Mammary epithelial cell (primary cell): ENCODE measurements at regions of chr1 and their contacts with region 1.

Region 1: DNA sequence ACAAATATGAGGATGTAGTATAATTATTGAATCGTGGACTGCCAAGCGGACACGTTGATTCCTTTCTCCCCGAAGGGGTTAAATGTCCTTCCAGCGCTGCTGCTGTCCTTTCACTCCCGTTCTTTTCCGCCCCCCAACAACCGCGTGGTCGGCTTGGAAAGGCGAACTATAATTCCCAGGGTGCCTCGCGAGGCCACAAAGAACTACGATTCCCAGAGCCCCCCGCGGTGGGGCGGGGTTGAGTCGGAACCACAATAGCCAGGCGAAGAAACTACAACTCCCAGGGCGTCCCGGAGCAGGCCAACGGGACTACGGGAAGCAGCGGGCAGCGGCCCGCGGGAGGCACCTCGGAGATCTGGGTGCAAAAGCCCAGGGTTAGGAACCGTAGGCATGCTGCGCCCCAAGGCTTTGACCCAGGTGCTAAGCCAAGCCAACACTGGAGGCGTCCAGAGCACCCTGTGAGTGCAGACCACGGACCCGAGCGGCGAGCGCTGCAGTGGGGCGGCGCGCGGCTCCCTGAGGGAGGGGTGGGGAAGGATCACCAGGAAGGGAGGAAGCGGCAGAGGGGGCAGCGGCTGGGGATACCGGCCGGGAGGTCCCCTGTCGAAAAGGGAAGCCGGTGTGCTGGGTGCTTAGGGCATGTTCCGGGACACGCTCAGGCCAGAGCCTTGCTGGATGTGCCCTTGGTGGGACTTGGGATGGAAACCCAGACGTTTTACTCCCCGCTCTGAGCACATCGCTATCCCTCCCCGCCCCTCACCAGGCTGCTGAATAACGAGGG is at the start of gene LAMTOR2:
- DNase-seq: peak; percentile 96
- H3K4me3 ChIP-seq: peak within 1 kb of the TSS; percentile 94 to 98 (median 98)
- H3K27ac ChIP-seq: peak within 1 kb of the TSS; percentile 73
- H3K4me1 ChIP-seq: peaks cover 6% of the 10 kb centered on the region
- H3K27me3 ChIP-seq: no peaks in the 10 kb centered on the region
- CTCF ChIP-seq: no peak
- total RNA-seq, gene LAMTOR2: 43.7 to 71.3 TPM

Region 2: DNA sequence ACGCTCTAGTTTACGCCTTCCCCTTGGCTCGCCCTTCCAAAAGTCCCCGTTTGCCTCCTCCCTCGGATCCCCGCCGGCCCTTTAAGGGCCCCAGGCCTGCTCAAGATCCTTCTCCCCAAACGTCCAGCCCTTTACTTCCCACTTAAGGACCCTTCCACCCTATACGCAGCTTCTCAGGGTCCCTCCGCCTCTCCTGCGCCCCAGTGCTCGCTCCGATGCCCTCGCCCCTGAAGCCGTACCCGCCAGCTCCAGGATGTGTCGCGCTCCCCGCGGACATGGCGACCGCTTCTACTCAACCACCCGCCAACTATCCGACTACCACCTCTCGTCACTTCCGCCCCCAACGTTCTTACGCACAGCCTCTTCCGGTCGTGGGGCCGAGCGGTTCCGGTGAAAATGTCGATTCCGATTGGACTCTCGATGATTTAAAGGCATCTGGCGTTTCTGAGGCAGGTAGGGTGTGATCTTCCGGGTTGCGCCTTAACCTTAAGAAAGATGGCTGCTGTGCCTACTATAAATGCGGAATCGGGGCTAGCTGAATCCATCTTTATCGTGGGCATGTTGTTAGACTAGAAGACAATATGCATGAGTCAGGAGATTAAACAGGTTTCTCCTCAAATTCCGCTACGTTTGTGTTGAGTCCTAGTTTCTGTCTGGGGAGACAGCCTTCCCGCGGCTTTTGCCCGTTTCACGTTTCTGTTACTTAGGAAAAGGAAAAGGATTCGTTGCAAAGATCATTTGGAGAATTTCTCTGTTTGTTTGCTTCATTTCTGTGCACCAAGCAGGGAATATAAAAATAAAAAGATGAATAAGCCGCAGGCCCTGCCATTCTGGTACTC is 120.4 kb before region 1 on chr1 and contains the start of gene KHDC4:
- CTCF ChIA-PET with region 1: no interaction called
- dilution Hi-C with region 1: no loop called
- in situ Hi-C with region 1: loop called in 1 of 2 experiments (anchors 10 kb)
- intact Hi-C with region 1: loop called (anchors 2 kb)
- DNase-seq: peak; percentile 99
- H3K4me3 ChIP-seq: peak within 1 kb of the TSS; percentile 82 to 95 (median 86)
- H3K27ac ChIP-seq: peak within 1 kb of the TSS; percentile 97
- H3K4me1 ChIP-seq: peaks cover 41% of the 10 kb centered on the region
- H3K27me3 ChIP-seq: no peaks in the 10 kb centered on the region
- CTCF ChIP-seq: no peak
- total RNA-seq, gene KHDC4: 35.3 to 56.5 TPM

Region 3: DNA sequence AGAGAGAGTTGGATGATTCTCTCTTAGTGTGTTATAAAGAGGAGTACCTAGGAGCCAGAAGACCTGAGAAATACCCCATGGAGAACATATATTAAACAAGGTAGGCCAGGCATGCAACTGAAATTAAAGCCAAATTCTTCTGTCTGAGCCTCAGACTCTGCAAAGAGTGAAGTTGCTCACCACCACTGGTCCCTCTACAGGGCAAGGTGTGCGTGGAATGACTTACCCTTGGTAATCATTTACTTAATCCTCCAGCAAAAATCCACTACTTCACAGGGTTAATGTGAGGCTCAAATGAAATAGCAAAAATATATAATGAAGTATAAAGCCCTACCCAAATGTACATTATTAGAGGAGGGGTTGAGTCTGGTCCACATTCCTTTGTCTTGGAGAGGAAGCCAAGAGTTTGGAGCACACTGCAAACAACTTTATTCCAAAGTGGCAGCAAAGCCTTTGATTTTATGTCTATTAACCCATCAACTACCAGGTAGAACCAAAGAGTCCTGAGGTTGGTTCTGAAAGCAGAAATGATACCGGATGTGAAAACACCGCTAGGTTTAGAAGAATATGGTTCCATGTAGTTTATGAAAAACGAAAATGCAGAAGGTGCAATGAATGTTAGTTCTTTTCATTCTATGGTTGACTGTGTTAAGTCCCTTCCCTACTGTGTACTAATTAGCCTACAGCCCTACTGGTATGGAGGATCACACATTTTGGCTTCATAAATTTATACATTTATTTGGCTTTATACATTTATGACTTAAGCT is 42.5 kb before region 1 on chr1:
- CTCF ChIA-PET with region 1: no interaction called
- dilution Hi-C with region 1: loop called (anchors 5 kb)
- in situ Hi-C with region 1: no loop called
- intact Hi-C with region 1: no loop called
- DNase-seq: no peak
- H3K4me3 ChIP-seq: no peak overlapping the region
- H3K27ac ChIP-seq: no peak overlapping the region
- H3K4me1 ChIP-seq: peaks cover under 1% of the 10 kb centered on the region
- H3K27me3 ChIP-seq: no peaks in the 10 kb centered on the region
- CTCF ChIP-seq: no peak

Region 4: GRCh38 chr1:156082309-156083091 is 27.8 kb after region 1 on chr1 and contains the start of gene MEX3A:
- CTCF ChIA-PET with region 1: interaction called, 3 read pairs
- dilution Hi-C with region 1: no loop called
- in situ Hi-C with region 1: no loop called
- intact Hi-C with region 1: loop called (anchors 2 kb)
- DNase-seq: no peak
- H3K4me3 ChIP-seq: peak within 1 kb of the TSS; percentile 70 to 98 (median 84)
- H3K27ac ChIP-seq: no peak within 1 kb of the TSS
- H3K4me1 ChIP-seq: no peaks in the 10 kb centered on the region
- H3K27me3 ChIP-seq: no peaks in the 10 kb centered on the region
- CTCF ChIP-seq: peak in 1 of 2 donors; percentile 1
- total RNA-seq, gene MEX3A: 1.9 to 2.5 TPM

Region 5: DNA sequence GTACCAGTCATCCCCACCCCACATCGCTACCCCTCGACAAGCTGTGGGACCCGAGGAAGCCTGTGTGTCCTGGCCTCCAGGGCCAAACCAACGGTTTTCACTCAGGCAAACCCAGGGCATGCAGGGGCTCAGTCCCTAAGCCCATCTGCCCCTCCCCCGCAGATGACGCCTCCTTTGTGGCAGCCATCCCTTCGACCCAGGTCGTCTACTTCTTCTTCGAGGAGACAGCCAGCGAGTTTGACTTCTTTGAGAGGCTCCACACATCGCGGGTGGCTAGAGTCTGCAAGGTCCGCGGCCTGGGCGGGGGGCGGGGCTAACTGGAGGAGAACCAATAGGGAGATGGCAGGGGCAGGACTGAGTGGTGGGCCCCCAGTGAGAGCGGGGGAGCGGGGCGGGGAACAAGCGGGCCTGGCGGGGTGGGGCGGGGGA is 106.1 kb after region 1 on chr1:
- CTCF ChIA-PET with region 1: no interaction called
- dilution Hi-C with region 1: loop called (anchors 5 kb)
- in situ Hi-C with region 1: no loop called
- intact Hi-C with region 1: no loop called
- DNase-seq: no peak
- H3K4me3 ChIP-seq: no peak overlapping the region
- H3K27ac ChIP-seq: no peak overlapping the region
- H3K4me1 ChIP-seq: no peaks in the 10 kb centered on the region
- H3K27me3 ChIP-seq: no peaks in the 10 kb centered on the region
- CTCF ChIP-seq: no peak